ENCODE measurements at regions of chr7 and their contacts with region 1.

Region 1: GRCh38 chr7:138002096-138002827 is 376 bp upstream of the CREB3L2 start:
- DNase-seq: peak; percentile 100
- H3K4me3 ChIP-seq: peak overlapping the region; percentile 58 to 96 (median 88)
- H3K27ac ChIP-seq: peak overlapping the region; percentile 81
- H3K4me1 ChIP-seq: peaks cover 37% of the 10 kb centered on the region
- H3K27me3 ChIP-seq: no peaks in the 10 kb centered on the region
- CTCF ChIP-seq: peak; percentile 77 to 96
- POLR2A ChIP-seq: no peak

Region 2: GRCh38 chr7:136956232-136956631 is 1046.0 kb before region 1 on chr7:
- CTCF ChIA-PET with region 1: no interaction called
- POLR2A ChIA-PET with region 1: no interaction called
- dilution Hi-C with region 1: no loop called
- intact Hi-C with region 1: loop called (anchors 10 kb)
- DNase-seq: no peak
- H3K4me3 ChIP-seq: peak overlapping the region in 1 of 3 experiments; percentile 35
- H3K27ac ChIP-seq: peak overlapping the region; percentile 93
- H3K4me1 ChIP-seq: peaks cover 46% of the 10 kb centered on the region
- H3K27me3 ChIP-seq: no peaks in the 10 kb centered on the region
- CTCF ChIP-seq: no peak
- POLR2A ChIP-seq: no peak

Region 3: DNA sequence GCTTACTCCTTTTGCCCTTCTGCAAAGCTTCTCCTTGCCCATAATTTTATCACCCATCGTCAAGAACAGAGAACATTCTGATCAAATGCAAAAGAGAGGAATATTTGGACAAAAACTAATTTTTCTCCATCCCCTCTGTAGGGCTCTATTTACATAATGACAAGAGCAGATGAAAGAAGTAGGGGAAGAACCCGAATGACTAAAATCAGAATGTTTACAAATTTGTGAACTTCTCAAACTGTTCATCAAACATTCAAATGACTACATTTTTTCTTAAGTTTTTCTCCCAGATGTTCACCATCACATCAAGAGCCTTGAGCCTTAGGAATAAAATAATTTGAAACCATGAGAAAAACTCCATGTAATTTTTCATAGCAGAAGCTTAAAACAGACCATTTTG is 274.8 kb before region 1 on chr7:
- CTCF ChIA-PET with region 1: no interaction called
- POLR2A ChIA-PET with region 1: no interaction called
- dilution Hi-C with region 1: no loop called
- intact Hi-C with region 1: no loop called
- DNase-seq: no peak
- H3K4me3 ChIP-seq: no peak overlapping the region
- H3K27ac ChIP-seq: no peak overlapping the region
- H3K4me1 ChIP-seq: no peaks in the 10 kb centered on the region
- H3K27me3 ChIP-seq: no peaks in the 10 kb centered on the region
- CTCF ChIP-seq: no peak
- POLR2A ChIP-seq: no peak

Region 4: DNA sequence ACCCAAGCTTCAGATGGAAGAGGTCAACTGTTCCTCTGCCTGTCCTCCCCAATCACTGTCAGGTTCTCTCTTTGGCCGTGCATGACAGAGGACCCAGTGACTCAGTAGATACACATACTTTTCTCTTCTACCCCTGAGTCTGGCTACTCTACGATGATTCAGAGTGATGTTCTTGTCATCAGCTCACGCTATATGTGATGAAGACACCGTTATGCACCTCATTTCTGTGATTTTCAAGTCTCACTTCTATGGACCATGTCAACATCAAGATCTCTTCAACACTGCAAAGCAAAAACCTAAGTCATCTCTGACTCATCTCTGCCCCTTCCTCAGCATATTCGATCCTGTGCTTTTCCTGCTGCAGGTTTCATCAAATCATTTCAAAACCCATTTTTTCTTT is 78.9 kb before region 1 on chr7:
- CTCF ChIA-PET with region 1: interaction called, 10 read pairs
- POLR2A ChIA-PET with region 1: no interaction called
- dilution Hi-C with region 1: no loop called
- intact Hi-C with region 1: no loop called
- DNase-seq: no peak
- H3K4me3 ChIP-seq: no peak overlapping the region
- H3K27ac ChIP-seq: no peak overlapping the region
- H3K4me1 ChIP-seq: peaks cover 6% of the 10 kb centered on the region
- H3K27me3 ChIP-seq: no peaks in the 10 kb centered on the region
- CTCF ChIP-seq: no peak
- POLR2A ChIP-seq: no peak

Region 5: GRCh38 chr7:137967143-137968018 is 34.9 kb before region 1 on chr7:
- CTCF ChIA-PET with region 1: interaction called, 18 read pairs
- POLR2A ChIA-PET with region 1: interaction called, 10 read pairs
- dilution Hi-C with region 1: no loop called
- intact Hi-C with region 1: loop called (anchors 1 kb)
- DNase-seq: peak; percentile 66
- H3K4me3 ChIP-seq: no peak overlapping the region
- H3K27ac ChIP-seq: peak overlapping the region; percentile 74
- H3K4me1 ChIP-seq: peaks cover 54% of the 10 kb centered on the region
- H3K27me3 ChIP-seq: no peaks in the 10 kb centered on the region
- CTCF ChIP-seq: no peak
- POLR2A ChIP-seq: no peak

Region 6: DNA sequence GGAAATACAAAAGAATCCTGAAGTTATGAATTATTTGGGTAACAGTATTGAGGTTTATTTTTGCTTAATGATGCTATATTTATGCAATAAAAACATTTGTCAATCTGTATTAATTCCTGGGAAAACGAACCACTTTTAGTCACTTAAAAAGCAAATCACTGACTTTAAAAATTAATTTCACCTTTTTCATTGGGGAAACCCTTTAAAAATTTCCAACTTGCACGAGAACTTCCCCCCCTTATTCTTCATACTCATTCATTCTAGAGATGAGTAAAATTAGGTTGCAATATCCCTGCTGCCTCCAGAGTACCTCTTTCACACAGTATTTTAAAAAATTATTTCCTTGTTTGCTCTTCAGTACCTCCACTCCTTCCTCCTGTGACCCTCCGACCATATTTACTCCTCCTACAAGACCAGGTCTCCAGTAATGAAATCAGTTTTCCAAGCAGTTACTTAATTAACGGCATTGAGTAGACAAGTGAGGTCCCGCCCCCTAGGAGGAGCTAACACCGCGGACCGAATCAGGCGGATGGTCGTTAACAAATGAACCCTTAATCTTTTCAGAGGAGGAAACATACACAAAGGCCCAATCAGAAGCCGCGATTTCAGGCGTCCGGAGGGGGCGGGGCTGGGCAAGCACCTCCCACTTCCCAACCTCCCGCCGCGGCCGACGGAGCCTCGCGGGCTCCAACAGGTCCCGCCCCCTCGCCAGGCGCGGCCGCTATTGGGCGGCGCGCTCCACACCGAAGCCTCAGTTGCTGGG is 457.3 kb after region 1 on chr7:
- CTCF ChIA-PET with region 1: no interaction called
- POLR2A ChIA-PET with region 1: no interaction called
- dilution Hi-C with region 1: no loop called
- intact Hi-C with region 1: loop called (anchors 1 kb)
- DNase-seq: peak; percentile 99
- H3K4me3 ChIP-seq: peak overlapping the region; percentile 21 to 54 (median 52)
- H3K27ac ChIP-seq: no peak overlapping the region
- H3K4me1 ChIP-seq: peaks cover 5% of the 10 kb centered on the region
- H3K27me3 ChIP-seq: no peaks in the 10 kb centered on the region
- CTCF ChIP-seq: no peak
- POLR2A ChIP-seq: no peak

Measured in endothelial cell of umbilical vein (primary cell).